ENCODE measurements at regions of chr11 and their contacts with region 1.

Region 1: DNA sequence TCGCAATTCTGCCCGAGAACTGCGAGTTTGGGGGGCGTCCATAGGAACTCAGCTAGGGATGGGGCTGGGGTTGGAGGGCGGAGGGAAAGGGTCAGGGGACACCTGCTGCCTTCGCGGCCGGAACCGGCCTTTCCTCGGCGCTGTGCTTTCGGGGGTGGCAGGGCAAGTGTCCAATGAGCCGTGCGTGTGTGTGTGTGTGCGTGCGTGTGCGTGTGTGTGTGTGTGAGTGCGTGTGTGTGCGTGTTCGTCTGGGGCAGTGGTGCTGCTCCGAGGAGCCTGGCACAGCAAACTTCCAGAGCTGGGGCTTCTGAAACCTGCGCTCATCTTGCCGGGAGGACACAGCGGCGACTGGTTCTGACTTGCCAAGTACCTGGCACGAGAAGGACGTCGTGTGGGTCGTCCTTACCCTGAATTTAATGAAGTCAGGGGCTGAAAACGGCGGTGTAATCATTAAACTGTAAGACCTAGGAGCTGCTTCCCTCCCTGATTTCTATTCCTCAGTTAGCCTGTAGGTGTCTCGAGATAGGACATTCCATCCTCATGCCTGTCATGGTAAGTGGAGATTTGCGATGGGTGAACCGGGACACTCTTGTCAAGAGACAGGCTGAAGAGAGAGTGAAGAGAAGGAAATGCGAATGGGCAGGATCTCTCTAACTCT is 27.0 kb upstream of the AMOTL1 start:
- DNase-seq: peak; percentile 42
- H3K4me3 ChIP-seq: peak overlapping the region; percentile 39 to 42
- H3K27ac ChIP-seq: peak overlapping the region; percentile 50 to 68
- H3K4me1 ChIP-seq: no peaks in the 10 kb centered on the region
- H3K27me3 ChIP-seq: no peaks in the 10 kb centered on the region
- CTCF ChIP-seq: peak in 3 of 4 experiments; percentile 37 to 64 (median 58)
- POLR2A ChIP-seq: no peak

Region 2: DNA sequence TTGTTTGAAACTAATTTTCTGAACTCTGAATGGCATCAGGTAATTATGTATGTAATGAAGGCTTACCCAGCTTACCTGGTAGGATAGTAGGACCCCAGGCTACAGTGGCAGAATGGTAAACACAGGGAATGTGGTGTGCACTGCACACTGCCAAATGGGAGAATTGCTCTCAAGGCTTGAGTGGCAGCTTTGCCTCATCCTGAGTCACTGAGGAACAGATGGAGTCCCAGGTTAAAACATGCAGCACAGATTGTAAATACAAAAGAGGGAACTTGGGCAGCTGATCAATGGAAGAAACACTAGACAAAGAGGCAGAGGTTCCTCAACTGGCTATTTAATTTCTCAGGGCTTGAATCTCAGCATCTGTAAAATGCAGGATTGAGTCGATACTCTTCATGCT is 364.3 kb before region 1 on chr11:
- intact Hi-C with region 1: no loop called
- DNase-seq: no peak
- H3K4me3 ChIP-seq: no peak overlapping the region
- H3K27ac ChIP-seq: no peak overlapping the region
- H3K4me1 ChIP-seq: no peaks in the 10 kb centered on the region
- H3K27me3 ChIP-seq: no peaks in the 10 kb centered on the region
- CTCF ChIP-seq: no peak
- POLR2A ChIP-seq: no peak

Region 3: GRCh38 chr11:94638902-94639373 is 102.2 kb before region 1 on chr11:
- intact Hi-C with region 1: loop called (anchors 10 kb)
- DNase-seq: peak; percentile 44
- H3K4me3 ChIP-seq: no peak overlapping the region
- H3K27ac ChIP-seq: peak overlapping the region; percentile 58 to 61
- H3K4me1 ChIP-seq: peaks cover 3% of the 10 kb centered on the region
- H3K27me3 ChIP-seq: no peaks in the 10 kb centered on the region
- CTCF ChIP-seq: no peak
- POLR2A ChIP-seq: no peak

Region 4: DNA sequence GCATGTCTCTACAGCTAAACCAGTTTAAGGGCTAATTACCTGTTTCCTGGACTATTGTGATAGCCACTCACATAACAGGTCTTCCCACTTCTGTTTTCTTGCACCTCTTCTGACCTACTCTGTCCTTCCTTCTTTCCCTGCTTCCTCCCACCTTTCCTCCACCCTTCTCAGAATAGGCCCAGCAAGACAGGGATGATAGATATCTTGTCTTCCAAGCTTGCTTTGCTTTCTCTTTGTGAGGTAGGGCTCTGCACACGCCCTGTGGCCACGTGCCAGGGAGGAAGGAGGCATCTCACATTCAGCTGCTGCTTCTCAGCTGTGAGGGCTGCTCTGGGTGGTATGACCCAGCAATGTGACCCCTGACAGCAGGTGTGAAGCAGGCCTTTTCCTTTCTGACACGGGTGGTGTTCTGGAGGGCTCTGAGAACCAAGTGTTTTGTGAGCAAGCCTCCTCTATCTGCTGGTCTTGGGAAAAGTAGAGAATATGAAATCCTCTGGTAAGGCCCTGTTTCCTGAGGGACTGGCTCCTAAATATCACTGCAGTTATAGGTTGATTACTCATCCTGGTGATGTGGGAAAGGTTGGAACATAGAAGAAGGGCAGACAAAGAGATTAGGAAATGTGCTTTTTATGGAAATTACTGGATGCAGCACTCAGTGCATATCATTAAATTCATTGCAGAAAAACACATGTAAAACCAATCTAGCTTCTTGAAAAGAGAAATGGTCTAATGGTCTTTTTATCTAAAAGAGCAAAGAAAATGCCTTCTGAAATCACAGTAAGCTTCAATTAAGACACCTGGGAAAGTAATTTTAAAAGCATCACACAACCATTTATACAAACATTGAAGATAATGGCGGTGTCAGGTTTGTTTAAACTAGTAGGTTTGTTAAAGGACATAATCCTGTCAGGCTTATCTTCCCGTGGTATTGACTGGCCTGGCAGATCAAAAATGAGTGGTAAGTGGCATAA is 35.5 kb after region 1 on chr11:
- intact Hi-C with region 1: no loop called
- DNase-seq: peak; percentile 40
- H3K4me3 ChIP-seq: no peak overlapping the region
- H3K27ac ChIP-seq: peak overlapping the region; percentile 5 to 29
- H3K4me1 ChIP-seq: peaks cover 6% of the 10 kb centered on the region
- H3K27me3 ChIP-seq: no peaks in the 10 kb centered on the region
- CTCF ChIP-seq: no peak
- POLR2A ChIP-seq: no peak

Measured in prostate gland (tissue), 2 donors.